ENCODE measurements at regions of chr10 and their contacts with region 1.

Region 1: DNA sequence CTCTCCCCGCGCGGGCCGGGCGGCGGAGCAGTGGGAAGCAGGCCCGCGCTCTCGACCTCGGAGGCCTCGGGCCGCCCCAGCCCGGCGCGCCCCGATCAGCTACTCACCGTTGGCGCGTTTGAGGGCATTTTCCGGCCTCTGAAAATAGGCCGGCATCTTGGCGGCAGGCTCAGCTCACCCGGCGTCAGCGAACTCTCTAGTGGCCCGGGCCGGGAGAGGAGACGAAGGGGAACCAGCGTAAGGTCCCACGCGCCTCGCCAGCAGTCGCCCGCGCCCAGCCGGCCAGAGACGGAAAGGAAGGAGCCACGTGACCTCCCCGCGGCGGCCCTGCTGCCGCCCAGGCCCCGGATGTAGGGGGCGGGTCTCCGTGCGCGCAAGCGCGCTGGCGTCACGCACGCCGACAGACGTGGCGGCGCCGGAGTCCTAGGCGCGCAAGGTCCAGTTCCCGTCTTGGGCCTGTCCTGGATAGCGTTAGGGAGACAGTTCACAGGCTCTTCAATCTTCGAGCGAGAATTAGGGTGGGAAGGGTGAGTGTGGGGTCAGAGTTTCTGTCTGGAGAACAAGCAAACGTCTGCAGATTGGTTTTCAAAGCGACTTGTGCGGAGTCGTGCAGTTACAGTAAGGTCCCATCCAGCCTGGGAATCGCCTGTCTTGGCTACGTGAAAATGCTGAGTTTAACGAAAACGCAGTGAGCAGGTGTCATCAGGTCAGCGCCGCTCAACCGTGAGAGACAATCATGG is at the start of gene EIF3A:
- DNase-seq: peak; percentile 96
- ATAC-seq: peak; percentile 75 to 92 (median 83)
- H3K4me3 ChIP-seq: peak within 1 kb of the TSS; percentile 97
- H3K4me3 Mint-ChIP-seq: peak within 1 kb of the TSS; percentile 97
- H3K27ac ChIP-seq: peak within 1 kb of the TSS; percentile 97
- H3K27ac Mint-ChIP-seq: peak within 1 kb of the TSS; percentile 87 to 99
- H3K4me1 ChIP-seq: peaks cover 27% of the 10 kb centered on the region
- H3K4me1 Mint-ChIP-seq: peaks cover 38 to 40% of the 10 kb centered on the region in 2 donors
- H3K27me3 ChIP-seq: no peaks in the 10 kb centered on the region
- H3K27me3 Mint-ChIP-seq: no peaks in the 10 kb centered on the region
- CTCF ChIP-seq: no peak
- total RNA-seq, gene EIF3A: 102 to 115 (median 110) TPM

Region 2: DNA sequence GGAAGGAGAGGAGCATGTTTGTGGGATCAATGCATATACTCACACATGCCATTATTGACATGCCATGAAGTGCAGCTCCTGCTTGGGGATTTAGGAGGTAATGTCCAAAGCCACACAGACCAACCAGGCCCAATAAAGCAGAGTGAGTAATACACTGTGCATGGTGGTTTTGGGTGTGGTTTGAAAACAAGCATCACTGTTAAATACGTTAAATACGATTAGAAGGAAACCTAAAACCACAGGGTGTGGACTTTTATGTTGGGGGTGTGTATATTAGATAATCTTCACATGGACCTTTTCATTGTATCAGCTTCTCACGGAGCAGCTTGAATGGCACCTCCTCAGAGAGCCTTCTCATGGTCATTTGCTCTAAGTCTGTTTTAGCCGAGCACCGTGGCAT is 10.3 kb after region 1 on chr10:
- intact Hi-C with region 1: loop called (anchors 1 kb)
- DNase-seq: peak; percentile 31 to 85
- ATAC-seq: peak; percentile 90 to 96 (median 95)
- H3K4me3 ChIP-seq: no peak overlapping the region
- H3K4me3 Mint-ChIP-seq: peak overlapping the region; percentile 83
- H3K27ac ChIP-seq: peak overlapping the region; percentile 84
- H3K27ac Mint-ChIP-seq: peak overlapping the region; percentile 12 to 90
- H3K4me1 ChIP-seq: peaks cover 31% of the 10 kb centered on the region
- H3K4me1 Mint-ChIP-seq: peaks cover 37 to 40% of the 10 kb centered on the region in 2 donors
- H3K27me3 ChIP-seq: no peaks in the 10 kb centered on the region
- H3K27me3 Mint-ChIP-seq: no peaks in the 10 kb centered on the region
- CTCF ChIP-seq: no peak

Region 3: DNA sequence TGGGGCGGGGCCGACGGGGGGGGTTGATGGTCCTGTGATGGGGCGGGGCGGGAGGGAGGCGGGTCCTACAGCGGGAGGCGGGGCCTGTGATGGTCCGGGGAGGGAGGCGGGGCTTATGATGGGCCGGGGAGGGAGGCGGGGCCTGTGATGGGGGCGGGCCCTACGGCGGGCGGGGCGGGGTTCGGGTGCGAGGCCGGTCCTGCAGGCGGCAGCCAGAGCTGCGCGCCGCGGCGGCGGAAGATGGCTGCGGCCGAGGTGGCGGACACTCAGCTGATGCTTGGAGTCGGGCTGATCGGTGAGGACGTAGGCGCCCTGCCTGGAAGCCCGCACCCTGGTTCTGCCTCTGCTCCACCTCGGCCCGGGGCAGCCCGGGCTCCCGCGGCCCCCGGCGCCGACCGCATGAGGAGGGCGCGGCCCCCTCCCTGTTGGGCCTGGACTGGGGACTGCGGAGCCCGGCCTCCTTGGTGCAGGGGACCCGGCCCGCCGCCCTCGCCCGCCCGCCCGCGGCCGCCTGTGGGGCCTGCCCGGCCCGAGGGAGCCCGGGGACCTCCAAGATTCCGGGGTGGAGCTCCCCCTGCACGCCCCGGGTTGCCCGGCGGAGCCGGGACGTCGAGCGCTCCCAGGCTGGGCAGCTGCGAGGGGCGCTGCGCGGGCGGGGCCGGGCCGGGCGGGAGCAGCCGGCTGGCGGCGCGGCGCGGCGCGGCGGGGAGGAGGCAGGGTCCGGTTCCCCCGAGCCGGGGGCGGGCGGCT is 23.4 kb after region 1 on chr10 and contains the start of gene DENND10:
- intact Hi-C with region 1: loop called (anchors 2 kb)
- DNase-seq: peak; percentile 69 to 89
- ATAC-seq: peak; percentile 89 to 95 (median 92)
- H3K4me3 ChIP-seq: peak within 1 kb of the TSS; percentile 47
- H3K4me3 Mint-ChIP-seq: peak within 1 kb of the TSS; percentile 92
- H3K27ac ChIP-seq: peak within 1 kb of the TSS; percentile 54
- H3K27ac Mint-ChIP-seq: peak within 1 kb of the TSS; percentile 77 to 80
- H3K4me1 ChIP-seq: peaks cover 26% of the 10 kb centered on the region
- H3K4me1 Mint-ChIP-seq: peaks cover 19 to 28% of the 10 kb centered on the region in 2 donors
- H3K27me3 ChIP-seq: no peaks in the 10 kb centered on the region
- H3K27me3 Mint-ChIP-seq: no peaks in the 10 kb centered on the region
- CTCF ChIP-seq: no peak
- total RNA-seq, gene DENND10: 24.0 to 42.4 (median 33.9) TPM

Region 4: GRCh38 chr10:119120413-119120867 is 39.7 kb after region 1 on chr10:
- intact Hi-C with region 1: loop called (anchors 5 kb)
- DNase-seq: peak in 1 of 2 donors; percentile 63
- ATAC-seq: peak; percentile 88 to 97 (median 96)
- H3K4me3 ChIP-seq: no peak overlapping the region
- H3K4me3 Mint-ChIP-seq: no peak overlapping the region
- H3K27ac ChIP-seq: peak overlapping the region; percentile 64
- H3K27ac Mint-ChIP-seq: peak overlapping the region; percentile 79 to 82
- H3K4me1 ChIP-seq: peaks cover 17% of the 10 kb centered on the region
- H3K4me1 Mint-ChIP-seq: peaks cover 7% of the 10 kb centered on the region in 2 donors
- H3K27me3 ChIP-seq: no peaks in the 10 kb centered on the region
- H3K27me3 Mint-ChIP-seq: no peaks in the 10 kb centered on the region
- CTCF ChIP-seq: no peak

Region 5: GRCh38 chr10:119178372-119179119 is 97.9 kb after region 1 on chr10 and contains the start of gene PRDX3:
- intact Hi-C with region 1: loop called (anchors 5 kb)
- DNase-seq: peak; percentile 90 to 94
- ATAC-seq: peak; percentile 98 to 99 (median 99)
- H3K4me3 ChIP-seq: peak within 1 kb of the TSS; percentile 96
- H3K4me3 Mint-ChIP-seq: peak within 1 kb of the TSS; percentile 97
- H3K27ac ChIP-seq: peak within 1 kb of the TSS; percentile 75
- H3K27ac Mint-ChIP-seq: peak within 1 kb of the TSS; percentile 87 to 98
- H3K4me1 ChIP-seq: peaks cover 19% of the 10 kb centered on the region
- H3K4me1 Mint-ChIP-seq: peaks cover 6 to 13% of the 10 kb centered on the region in 2 donors
- H3K27me3 ChIP-seq: no peaks in the 10 kb centered on the region
- H3K27me3 Mint-ChIP-seq: no peaks in the 10 kb centered on the region
- CTCF ChIP-seq: peak; percentile 14
- total RNA-seq, gene PRDX3: 12.5 to 17.4 (median 15.3) TPM

Region 6: GRCh38 chr10:119270762-119271366 is 190.2 kb after region 1 on chr10:
- intact Hi-C with region 1: no loop called
- DNase-seq: peak; percentile 75
- ATAC-seq: peak; percentile 41 to 74 (median 57)
- H3K4me3 ChIP-seq: peak overlapping the region; percentile 1
- H3K4me3 Mint-ChIP-seq: peak overlapping the region; percentile 90
- H3K27ac ChIP-seq: peak overlapping the region; percentile 100
- H3K27ac Mint-ChIP-seq: peak overlapping the region; percentile 94 to 99
- H3K4me1 ChIP-seq: peaks cover 81% of the 10 kb centered on the region
- H3K4me1 Mint-ChIP-seq: peaks cover 75% of the 10 kb centered on the region in 2 donors
- H3K27me3 ChIP-seq: no peaks in the 10 kb centered on the region
- H3K27me3 Mint-ChIP-seq: no peaks in the 10 kb centered on the region
- CTCF ChIP-seq: no peak

Measured in natural killer cell (primary cell).